Activated CD8-positive, alpha-beta T cell treated with anti-CD3 and anti-CD28 coated beads, Interleukin-2, amount 10 ng/mL, durations not matched to agents 7 days and 5 days (primary cell): ENCODE measurements at regions of chr1 and their contacts with region 1.

Region 1: DNA sequence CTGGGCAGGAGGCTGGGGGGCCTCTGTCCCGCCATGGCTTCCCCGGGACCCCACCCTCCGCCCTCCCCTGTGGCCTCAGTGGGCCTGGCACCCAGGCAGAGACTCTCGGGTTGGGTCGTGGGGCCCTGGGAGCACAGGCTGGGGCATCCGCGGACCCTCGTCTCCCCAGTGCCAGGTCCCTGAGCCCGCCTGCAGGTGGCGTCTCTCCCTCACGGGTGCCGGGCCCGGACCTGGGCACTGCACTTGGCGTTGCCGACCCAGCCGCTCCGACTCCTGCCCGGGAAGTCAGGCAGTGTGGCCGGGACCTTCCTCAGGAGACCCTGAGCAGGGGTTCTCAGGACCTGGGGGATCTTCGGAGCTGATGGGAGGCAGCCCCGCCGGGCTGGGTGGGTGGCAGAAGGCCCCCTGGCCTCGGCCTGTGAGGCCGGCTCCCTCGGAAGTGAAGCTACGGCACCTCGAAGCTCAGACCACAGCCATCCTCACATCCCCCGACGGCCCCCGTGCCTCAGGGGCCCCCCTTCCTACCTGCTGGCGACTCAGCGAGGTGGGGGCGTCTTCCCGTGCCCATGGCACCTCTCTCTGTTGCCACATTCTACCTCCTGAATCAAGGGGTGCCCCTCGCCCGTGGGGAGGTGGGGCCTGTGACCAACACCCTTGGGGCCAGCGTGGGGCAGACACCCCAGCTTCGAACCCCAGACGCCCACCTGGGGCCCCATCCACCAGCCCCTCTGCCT is 6.4 kb upstream of the C1orf159 start:
- DNase-seq: peak; percentile 87
- ATAC-seq: peak; percentile 97
- H3K4me3 Mint-ChIP-seq: no peak overlapping the region
- H3K27ac Mint-ChIP-seq: no peak overlapping the region
- H3K4me1 Mint-ChIP-seq: peaks cover 19% of the 10 kb centered on the region
- H3K27me3 Mint-ChIP-seq: peaks cover 6% of the 10 kb centered on the region

Region 2: DNA sequence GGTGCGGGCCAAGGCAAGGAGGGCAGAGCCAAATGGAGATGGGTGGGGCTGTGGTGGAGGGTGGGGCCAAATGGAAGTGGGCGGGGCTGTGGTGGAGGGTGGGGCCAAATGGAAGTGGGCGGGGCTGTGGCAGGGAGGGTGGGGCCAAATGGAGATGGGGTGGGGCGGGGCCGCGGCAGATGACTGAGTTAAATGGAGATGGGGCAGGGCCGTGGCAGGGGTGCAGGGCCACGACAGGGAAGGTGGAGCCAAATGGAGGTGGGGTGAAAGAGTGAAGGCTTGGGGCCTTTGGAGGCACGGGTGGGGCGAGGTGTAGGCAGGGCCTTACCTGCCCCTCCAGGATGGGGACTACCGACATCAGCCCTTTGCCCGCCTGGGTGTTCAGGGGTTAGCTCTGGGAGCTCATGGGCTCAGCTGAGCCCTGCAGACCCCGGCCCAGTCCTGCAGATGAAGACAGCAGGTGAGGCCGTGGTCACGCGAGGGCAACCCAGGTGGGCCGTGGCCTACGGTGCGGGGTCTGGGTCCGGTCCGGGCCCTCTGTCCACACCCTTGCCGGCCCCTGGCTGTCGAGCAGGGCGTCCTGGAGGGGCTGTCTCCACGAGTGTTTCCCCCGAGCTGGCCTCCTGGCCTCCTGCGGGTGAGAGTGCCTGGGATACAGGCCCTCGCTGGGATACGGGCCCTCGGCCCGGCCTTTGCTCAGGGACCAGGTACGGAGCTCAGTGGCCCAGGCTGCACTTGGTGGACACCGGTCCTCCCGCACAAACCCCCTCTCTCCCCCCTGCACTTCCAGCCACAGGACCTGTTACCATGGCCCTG is 30.4 kb before region 1 on chr1:
- CTCF ChIA-PET with region 1: no interaction called
- POLR2A ChIA-PET with region 1: no interaction called
- DNase-seq: no peak
- ATAC-seq: no peak
- H3K4me3 Mint-ChIP-seq: no peak overlapping the region
- H3K27ac Mint-ChIP-seq: no peak overlapping the region
- H3K4me1 Mint-ChIP-seq: peaks cover 3% of the 10 kb centered on the region
- H3K27me3 Mint-ChIP-seq: no peaks in the 10 kb centered on the region

Region 3: DNA sequence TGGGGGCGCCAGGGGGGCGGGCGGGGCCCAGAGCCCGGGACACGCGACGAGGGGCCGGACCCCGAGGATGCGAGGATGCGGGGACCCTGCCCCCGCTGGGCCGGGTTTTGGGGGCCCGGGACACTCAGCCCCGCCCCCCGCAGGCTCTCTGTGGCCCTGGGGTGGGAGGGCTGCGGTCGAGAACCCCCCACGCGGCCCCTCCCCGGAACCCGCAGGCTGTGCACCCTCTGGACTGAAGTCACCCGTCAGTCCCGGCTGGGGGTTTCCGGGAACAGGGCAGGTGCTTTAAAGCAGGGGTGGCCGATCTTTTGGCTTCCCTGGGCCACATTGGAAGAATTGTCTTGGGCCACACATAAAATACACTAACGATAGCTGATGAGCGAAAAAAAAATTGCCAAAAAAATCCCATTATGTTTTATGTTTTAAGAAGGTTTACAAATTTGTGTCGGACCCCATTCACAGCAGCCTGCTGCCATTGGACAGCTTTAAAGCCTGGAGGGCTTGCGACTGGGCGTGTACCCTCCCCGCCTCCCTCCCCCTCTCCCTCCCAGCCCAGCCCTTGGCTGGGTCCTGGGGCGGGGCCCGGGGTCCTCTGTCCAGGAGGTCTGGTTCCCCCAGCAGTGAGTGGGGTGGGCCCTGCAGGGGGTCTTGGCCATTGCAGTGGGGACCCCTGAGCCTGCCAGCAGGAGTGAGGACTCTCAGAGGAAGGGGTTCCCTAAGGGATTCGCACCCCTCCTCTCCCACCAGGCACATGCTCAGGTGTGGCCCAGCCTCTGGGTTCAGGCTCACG is 15.2 kb after region 1 on chr1:
- CTCF ChIA-PET with region 1: interaction called, 13 read pairs
- POLR2A ChIA-PET with region 1: interaction called, 3 read pairs
- DNase-seq: peak; percentile 85
- ATAC-seq: peak; percentile 80
- H3K4me3 Mint-ChIP-seq: peak overlapping the region; percentile 66
- H3K27ac Mint-ChIP-seq: peak overlapping the region; percentile 93
- H3K4me1 Mint-ChIP-seq: peaks cover 36% of the 10 kb centered on the region
- H3K27me3 Mint-ChIP-seq: no peaks in the 10 kb centered on the region

Region 4: DNA sequence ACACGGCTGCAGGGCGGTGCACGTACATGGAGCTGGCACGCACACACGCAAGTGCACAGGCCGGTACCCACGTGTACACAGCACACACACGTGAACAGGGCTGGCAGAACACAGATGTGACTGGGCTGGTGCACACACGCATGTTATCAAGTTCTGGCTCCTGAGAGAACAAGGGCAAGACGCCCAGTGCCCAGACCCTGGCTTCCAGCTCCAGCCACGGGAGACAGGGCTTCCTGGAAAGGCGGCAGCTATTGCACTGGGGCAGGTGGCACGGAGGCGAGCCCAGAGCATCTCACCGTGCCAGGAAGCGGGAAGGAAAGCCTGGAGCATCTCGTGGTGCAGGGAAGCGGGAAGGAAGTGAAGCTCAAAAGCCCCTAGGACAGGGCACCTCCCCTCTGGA is 103.7 kb after region 1 on chr1:
- CTCF ChIA-PET with region 1: interaction called, 37 read pairs
- POLR2A ChIA-PET with region 1: interaction called, 5 read pairs
- DNase-seq: no peak
- ATAC-seq: no peak
- H3K4me3 Mint-ChIP-seq: no peak overlapping the region
- H3K27ac Mint-ChIP-seq: no peak overlapping the region
- H3K4me1 Mint-ChIP-seq: peaks cover 19% of the 10 kb centered on the region
- H3K27me3 Mint-ChIP-seq: no peaks in the 10 kb centered on the region

Region 5: GRCh38 chr1:1250786-1251284 is 128.6 kb after region 1 on chr1:
- CTCF ChIA-PET with region 1: interaction called, 51 read pairs
- POLR2A ChIA-PET with region 1: interaction called, 5 read pairs
- DNase-seq: peak; percentile 87
- ATAC-seq: peak; percentile 95
- H3K4me3 Mint-ChIP-seq: peak overlapping the region; percentile 44
- H3K27ac Mint-ChIP-seq: peak overlapping the region; percentile 88
- H3K4me1 Mint-ChIP-seq: peaks cover 19% of the 10 kb centered on the region
- H3K27me3 Mint-ChIP-seq: peaks cover 6% of the 10 kb centered on the region

Region 6: DNA sequence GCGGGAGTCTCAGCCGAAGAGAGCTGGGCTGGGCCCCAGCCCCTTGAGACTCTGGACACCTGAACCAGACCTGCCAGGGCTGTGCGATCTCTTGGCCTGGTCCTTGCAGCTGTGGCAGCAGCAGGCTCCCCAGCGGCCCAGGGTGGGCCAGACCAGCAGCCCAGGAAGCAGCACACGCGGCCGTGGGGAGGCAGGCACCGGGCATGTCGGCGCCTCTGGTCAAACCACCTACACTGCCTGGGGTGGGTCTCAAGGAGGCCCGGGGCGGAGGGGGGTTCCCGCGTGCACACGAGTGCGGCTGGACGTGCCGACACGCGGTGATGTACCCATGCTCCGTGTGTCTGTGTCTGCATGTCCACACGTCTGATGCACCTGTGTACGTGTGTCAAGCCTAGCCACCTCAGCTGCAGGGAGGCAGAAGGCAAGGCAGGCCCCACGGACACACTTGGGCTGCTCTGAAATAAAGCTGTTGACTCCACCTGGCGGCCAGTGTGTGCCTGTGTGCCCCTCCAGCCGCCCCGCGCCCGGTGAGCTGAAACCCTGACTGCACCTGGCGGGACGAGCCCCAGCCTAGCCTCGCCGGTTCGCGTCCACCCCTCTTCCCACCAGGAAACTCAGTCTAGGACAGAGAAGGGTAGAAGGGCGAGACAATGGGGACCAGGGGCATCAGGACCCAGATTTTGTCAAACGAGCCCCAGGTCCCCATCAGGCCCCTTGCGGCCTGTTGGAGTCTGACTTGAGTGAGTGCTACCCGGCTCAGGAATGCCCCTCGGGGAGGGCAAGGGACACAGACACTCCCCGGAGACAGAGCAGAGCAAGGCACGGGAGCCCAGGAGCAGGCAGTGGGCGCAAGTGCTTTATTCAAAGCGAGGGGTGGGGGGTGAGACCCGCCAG is 169.6 kb after region 1 on chr1:
- CTCF ChIA-PET with region 1: interaction called, 61 read pairs
- POLR2A ChIA-PET with region 1: no interaction called
- DNase-seq: peak; percentile 78
- ATAC-seq: peak; percentile 87
- H3K4me3 Mint-ChIP-seq: no peak overlapping the region
- H3K27ac Mint-ChIP-seq: no peak overlapping the region
- H3K4me1 Mint-ChIP-seq: peaks cover 6% of the 10 kb centered on the region
- H3K27me3 Mint-ChIP-seq: no peaks in the 10 kb centered on the region